Lower leg skin (tissue), 4 donors: ENCODE measurements at regions of chr12 and their contacts with region 1.

Region 1: DNA sequence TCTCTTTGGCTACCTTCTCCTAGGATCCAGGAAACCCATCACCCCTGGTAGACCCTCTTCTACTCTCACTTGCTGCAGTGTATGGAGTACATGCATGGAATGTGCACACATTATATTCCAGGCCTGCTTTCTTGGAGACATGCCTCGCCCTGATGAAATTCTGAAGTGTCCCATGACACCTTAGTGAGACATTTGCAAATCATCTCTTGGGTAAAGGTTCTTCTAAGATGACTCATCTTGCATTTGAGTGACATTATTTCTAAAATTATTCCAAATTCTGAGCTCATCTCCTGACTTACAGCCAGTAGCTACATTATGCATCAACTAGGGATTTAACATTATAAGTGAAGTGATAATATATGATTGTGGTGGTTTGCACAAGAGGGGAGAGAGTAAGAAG is 49.8 kb downstream of the SDR9C7 start:
- DNase-seq: no peak
- H3K4me3 ChIP-seq: no peak overlapping the region
- CTCF ChIP-seq: no peak
- POLR2A ChIP-seq: no peak

Region 2: GRCh38 chr12:56839915-56840325 is 44.5 kb before region 1 on chr12:
- intact Hi-C with region 1: no loop called
- DNase-seq: peak in 1 of 2 donors; percentile 16
- H3K4me3 ChIP-seq: no peak overlapping the region
- CTCF ChIP-seq: no peak
- POLR2A ChIP-seq: no peak

Region 3: DNA sequence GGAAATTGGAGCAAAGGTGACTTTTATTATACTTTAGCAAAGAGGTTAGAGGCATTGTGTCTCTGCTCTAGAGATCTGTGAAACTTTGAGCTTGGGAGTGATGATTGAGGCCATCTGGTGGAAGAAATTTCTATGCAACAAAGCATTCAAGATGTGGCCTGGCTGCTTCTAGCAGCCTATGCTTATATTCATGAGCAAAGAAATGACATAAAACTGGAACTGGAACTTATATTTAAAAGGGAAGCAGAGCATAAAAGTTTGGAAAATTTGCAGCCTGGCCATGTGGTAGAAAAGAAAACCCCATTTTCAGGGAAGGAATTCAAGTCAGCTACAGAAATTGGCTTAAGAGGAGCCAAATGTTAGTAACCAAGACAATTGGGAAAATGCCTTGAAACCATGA is 20.6 kb before region 1 on chr12:
- intact Hi-C with region 1: loop called (anchors 2 kb)
- DNase-seq: no peak
- H3K4me3 ChIP-seq: no peak overlapping the region
- CTCF ChIP-seq: no peak
- POLR2A ChIP-seq: no peak